IMR-90 (cell line): ENCODE measurements at regions of chr7 and their contacts with region 1.

Region 1: DNA sequence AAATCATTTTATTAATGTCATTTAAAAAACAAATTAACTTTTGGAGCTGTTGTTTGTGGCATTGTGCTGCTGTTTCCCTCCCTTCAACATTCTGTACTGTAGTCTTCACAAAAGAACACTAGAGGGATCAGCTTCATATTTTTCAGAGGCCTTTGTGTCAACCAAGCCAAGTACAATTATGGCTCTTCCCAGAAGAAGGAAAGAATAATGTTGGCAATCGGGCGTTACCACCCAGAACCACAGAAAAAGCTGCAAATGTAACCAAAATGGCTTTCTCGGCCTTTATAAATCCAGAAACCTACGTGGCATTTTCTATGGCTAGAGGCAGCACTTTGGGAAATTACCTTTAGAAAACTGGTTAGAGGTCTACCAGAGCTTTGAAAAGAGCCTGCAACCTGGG is 98.8 kb upstream of the COL1A2 start:
- DNase-seq: peak; percentile 85
- ATAC-seq: peak; percentile 57
- H3K4me3 ChIP-seq: peak overlapping the region; percentile 24; the same call in 1 of the 2 replicates
- H3K27ac ChIP-seq: peak overlapping the region; percentile 95; the same call in 1 of the 2 replicates
- H3K4me1 ChIP-seq: peaks cover 20% of the 10 kb centered on the region
- H3K27me3 ChIP-seq: no peaks in the 10 kb centered on the region
- CTCF ChIP-seq: peak; percentile 81
- POLR2A ChIP-seq: peak; percentile 36; the same call in 1 of the 2 replicates
- RAD21 ChIP-seq: peak; percentile 91

Region 2: GRCh38 chr7:94348142-94348541 is 52.3 kb after region 1 on chr7:
- CTCF ChIA-PET with region 1: interaction called, 4 read pairs
- POLR2A ChIA-PET with region 1: interaction called, 5 read pairs
- dilution Hi-C with region 1: no loop called
- in situ Hi-C with region 1: no loop called
- intact Hi-C with region 1: loop called (anchors 1 kb)
- DNase-seq: peak; percentile 95
- ATAC-seq: peak; percentile 88
- H3K4me3 ChIP-seq: peak overlapping the region; percentile 1; the same call in 1 of the 2 replicates
- H3K27ac ChIP-seq: peak overlapping the region; percentile 71
- H3K4me1 ChIP-seq: peaks cover 16% of the 10 kb centered on the region
- H3K27me3 ChIP-seq: no peaks in the 10 kb centered on the region
- CTCF ChIP-seq: no peak
- POLR2A ChIP-seq: no peak
- RAD21 ChIP-seq: no peak

Region 3: DNA sequence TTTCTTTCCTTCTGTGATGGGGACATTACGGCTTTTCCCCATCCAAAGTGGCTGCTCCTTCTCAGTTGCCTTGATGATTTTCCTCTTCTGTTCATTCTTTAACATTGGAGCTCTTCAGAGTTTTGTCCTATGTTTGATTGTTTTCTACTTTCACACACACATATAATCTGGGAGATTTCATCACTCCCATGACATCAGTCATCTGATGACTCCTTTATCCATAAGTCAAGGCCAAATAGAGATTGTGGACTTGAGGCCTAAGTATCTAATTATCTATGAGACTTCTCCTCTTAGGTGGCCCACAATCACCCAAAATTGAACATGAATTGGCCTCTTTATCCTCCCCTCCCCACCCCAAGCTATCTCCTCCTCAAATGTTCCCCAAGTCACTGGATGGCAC is 93.5 kb after region 1 on chr7:
- CTCF ChIA-PET with region 1: interaction called, 31 read pairs
- POLR2A ChIA-PET with region 1: interaction called, 169 read pairs
- dilution Hi-C with region 1: no loop called
- in situ Hi-C with region 1: no loop called
- intact Hi-C with region 1: loop called (anchors 1 kb)
- DNase-seq: no peak
- ATAC-seq: no peak
- H3K4me3 ChIP-seq: no peak overlapping the region
- H3K27ac ChIP-seq: peak overlapping the region; percentile 92
- H3K4me1 ChIP-seq: peaks cover 20% of the 10 kb centered on the region
- H3K27me3 ChIP-seq: no peaks in the 10 kb centered on the region
- CTCF ChIP-seq: no peak
- POLR2A ChIP-seq: no peak
- RAD21 ChIP-seq: no peak

Region 4: DNA sequence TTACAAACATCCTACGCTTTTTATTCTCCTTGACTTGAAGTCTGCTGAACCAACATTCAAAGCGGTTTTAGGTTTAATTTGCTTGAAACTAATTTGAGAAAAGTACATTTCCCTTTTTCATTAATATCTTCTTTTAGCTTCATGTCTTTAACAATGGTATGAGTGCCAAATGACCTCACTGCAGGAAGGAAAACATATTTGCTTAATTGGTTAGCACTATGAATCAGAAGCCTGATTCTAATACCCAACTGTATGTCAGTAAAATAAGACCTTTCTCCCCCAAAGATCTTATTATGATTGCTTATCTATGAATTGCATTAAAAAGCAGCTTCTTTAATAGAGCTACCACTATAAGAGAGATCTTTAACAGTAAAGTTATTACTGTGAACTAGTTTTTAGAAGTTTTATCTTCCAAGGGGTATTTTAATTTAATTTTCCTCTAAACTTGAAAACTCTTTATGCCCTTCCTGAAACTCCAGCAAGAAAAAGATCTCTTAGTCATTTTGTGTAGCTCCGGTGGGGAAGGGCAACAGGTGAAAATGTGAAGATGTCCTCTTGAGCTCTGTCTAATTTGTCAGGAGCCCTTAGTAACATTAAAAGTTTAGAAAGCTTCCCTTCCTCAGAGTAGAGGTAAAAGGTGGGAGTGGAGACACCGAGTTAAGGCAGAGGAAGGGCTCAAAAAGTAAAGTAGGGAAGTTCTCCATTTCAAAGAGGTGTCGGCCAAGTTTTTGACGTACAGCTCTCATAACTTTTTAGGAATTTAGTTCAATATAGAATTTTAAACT is 105.0 kb after region 1 on chr7:
- CTCF ChIA-PET with region 1: interaction called, 31 read pairs
- POLR2A ChIA-PET with region 1: interaction called, 169 read pairs
- dilution Hi-C with region 1: no loop called
- in situ Hi-C with region 1: loop called (anchors 5 kb)
- intact Hi-C with region 1: no loop called
- DNase-seq: no peak
- ATAC-seq: no peak
- H3K4me3 ChIP-seq: peak overlapping the region; percentile 50
- H3K27ac ChIP-seq: peak overlapping the region; percentile 91
- H3K4me1 ChIP-seq: peaks cover 12% of the 10 kb centered on the region
- H3K27me3 ChIP-seq: no peaks in the 10 kb centered on the region
- CTCF ChIP-seq: no peak
- POLR2A ChIP-seq: no peak
- RAD21 ChIP-seq: no peak

Region 5: GRCh38 chr7:94436018-94436604 is 140.3 kb after region 1 on chr7:
- CTCF ChIA-PET with region 1: interaction called, 79 read pairs
- POLR2A ChIA-PET with region 1: interaction called, 5 read pairs
- dilution Hi-C with region 1: no loop called
- in situ Hi-C with region 1: loop called (anchors 5 kb)
- intact Hi-C with region 1: loop called (anchors 1 kb)
- DNase-seq: peak; percentile 78
- ATAC-seq: peak; percentile 43
- H3K4me3 ChIP-seq: no peak overlapping the region
- H3K27ac ChIP-seq: no peak overlapping the region
- H3K4me1 ChIP-seq: peaks cover 8% of the 10 kb centered on the region
- H3K27me3 ChIP-seq: no peaks in the 10 kb centered on the region
- CTCF ChIP-seq: peak; percentile 81
- POLR2A ChIP-seq: no peak
- RAD21 ChIP-seq: peak; percentile 68